ENCODE measurements at regions of chr2 and their contacts with region 1.

Region 1: DNA sequence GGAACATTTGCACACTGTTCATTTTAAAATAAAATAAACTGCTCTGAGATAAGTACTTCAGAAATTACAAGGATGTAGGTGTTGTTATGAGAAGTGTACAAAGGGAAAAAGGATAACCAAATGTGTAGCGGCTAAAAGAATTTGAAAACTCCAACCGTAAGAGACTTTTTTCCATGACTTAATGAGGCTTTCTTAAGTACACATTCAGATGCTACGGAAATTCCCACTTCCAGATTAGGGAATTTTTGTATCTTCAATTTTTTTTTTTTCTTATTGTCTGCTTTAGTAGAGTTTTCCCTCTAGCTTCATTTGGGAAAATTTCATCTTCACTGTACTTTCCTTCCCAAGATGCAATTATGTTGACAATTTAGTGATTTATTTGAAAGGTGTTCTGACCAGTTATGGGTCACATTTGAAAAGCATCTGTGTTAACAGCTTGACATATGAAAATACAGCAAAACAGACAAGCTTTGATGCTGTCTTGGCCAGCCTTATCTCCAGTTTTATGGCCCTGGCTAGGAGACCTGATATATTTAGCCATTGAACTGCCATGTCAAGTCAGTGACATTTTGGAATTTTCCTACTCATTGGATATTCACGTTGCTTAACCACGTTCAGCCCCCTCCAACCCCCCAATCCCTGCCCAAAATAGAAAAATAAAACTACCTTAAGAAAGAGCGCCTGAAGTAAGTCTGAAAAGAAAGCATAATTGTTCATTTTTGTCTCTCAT is 105.6 kb downstream of the FEZ2 start:
- DNase-seq: no peak
- ATAC-seq: peak in 2 of 4 donors; percentile 25 to 31
- H3K4me3 ChIP-seq: no peak overlapping the region
- H3K27ac ChIP-seq: peak overlapping the region in 7 of 12 donors; percentile 8 to 50 (median 26)
- H3K4me1 ChIP-seq: peaks cover 0 to 40% (median 12%) of the 10 kb centered on the region in 12 donors
- H3K27me3 ChIP-seq: no peaks in the 10 kb centered on the region
- CTCF ChIP-seq: no peak
- POLR2A ChIP-seq: no peak

Region 2: GRCh38 chr2:36461039-36461681 is 31.2 kb before region 1 on chr2:
- intact Hi-C with region 1: loop called in 1 of 10 experiments (anchors 5 kb)
- DNase-seq: no peak
- ATAC-seq: peak in 3 of 4 donors; percentile 37 to 57 (median 37)
- H3K4me3 ChIP-seq: no peak overlapping the region
- H3K27ac ChIP-seq: peak overlapping the region in 5 of 12 donors; percentile 8 to 50 (median 31)
- H3K4me1 ChIP-seq: peaks cover 3 to 67% (median 38%) of the 10 kb centered on the region in 12 donors
- H3K27me3 ChIP-seq: no peaks in the 10 kb centered on the region
- CTCF ChIP-seq: no peak
- POLR2A ChIP-seq: no peak

Measured in heart left ventricle (tissue), 16 donors.